Ovary (tissue), 10 donors: ENCODE measurements at regions of chr16 and their contacts with region 1.

Region 1: DNA sequence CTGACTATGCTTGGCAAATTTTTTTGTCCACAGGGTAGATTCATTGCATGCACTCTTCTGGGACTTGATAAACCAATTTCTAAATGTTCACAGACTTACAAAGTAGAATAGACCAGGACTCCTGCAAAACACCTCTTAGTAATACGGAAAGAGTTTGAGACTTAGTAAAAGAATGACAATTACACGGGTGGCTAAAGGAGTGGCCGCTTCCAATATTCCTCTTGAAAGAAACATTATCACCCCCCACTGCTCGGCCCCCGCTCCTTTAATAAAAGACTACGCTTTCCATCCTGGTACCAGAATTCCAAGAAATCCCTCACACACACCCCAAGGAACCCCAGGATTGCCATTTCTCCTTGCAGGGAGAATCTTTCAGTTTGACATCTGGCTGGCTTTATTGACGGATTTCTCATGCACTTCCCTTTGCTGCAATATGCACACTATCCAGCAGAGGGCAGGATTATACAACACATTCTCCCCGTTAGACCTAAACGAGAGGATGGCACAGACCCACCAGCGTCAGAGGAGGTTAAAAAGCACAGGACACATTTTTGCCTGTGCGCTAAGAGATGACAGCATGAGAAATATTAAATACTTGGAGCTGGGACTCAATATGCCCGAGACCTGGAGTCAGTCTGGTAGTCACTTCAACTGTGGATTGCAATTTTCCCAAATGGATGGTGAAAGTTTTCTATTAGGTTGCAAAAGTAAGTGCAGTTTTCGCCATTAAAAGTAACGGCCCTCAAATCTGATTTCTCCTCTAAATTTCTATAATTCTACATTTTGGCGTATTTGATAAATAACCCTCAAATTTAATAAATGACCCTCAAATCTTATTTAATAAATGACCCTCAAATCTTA is 46.6 kb upstream of the NUDT7 start:
- DNase-seq: peak; percentile 42 to 76 (median 46)
- H3K4me3 ChIP-seq: no peak overlapping the region
- H3K27ac ChIP-seq: no peak overlapping the region
- H3K4me1 ChIP-seq: no peaks in the 10 kb centered on the region
- H3K27me3 ChIP-seq: no peaks in the 10 kb centered on the region
- CTCF ChIP-seq: peak; percentile 56 to 83 (median 82)
- EP300 ChIP-seq: no peak
- POLR2A ChIP-seq: no peak

Region 2: DNA sequence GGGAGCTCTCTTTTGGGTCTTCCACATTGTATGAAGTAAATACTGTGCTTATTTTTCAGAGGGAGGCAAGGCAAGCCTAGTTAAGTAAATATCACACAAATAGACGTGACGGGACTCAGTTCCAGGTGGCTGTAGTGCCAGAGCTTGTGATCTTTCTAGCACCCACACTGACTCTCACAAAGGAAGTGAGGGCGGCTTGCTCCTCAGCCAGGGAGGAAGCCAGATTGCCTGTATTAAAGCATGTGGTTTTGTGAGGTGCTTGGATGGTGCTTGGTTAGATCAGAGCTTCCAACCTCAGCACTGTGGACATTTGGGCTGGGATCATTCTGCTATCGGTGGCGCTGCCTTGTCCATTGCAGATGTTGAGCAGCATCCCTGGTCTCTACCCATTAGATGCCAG is 192.8 kb after region 1 on chr16:
- intact Hi-C with region 1: no loop called
- DNase-seq: no peak
- H3K4me3 ChIP-seq: no peak overlapping the region
- H3K27ac ChIP-seq: no peak overlapping the region
- H3K4me1 ChIP-seq: no peaks in the 10 kb centered on the region
- H3K27me3 ChIP-seq: no peaks in the 10 kb centered on the region
- CTCF ChIP-seq: no peak
- EP300 ChIP-seq: no peak
- POLR2A ChIP-seq: no peak

Region 3: GRCh38 chr16:77971306-77972271 is 295.9 kb after region 1 on chr16:
- intact Hi-C with region 1: loop called in 1 of 4 experiments (anchors 2 kb)
- DNase-seq: peak; percentile 26 to 71 (median 67)
- H3K4me3 ChIP-seq: no peak overlapping the region
- H3K27ac ChIP-seq: no peak overlapping the region
- H3K4me1 ChIP-seq: no peaks in the 10 kb centered on the region
- H3K27me3 ChIP-seq: no peaks in the 10 kb centered on the region
- CTCF ChIP-seq: peak in 2 of 3 donors; percentile 14 to 50
- EP300 ChIP-seq: no peak
- POLR2A ChIP-seq: no peak

Region 4: GRCh38 chr16:78002915-78003538 is 327.3 kb after region 1 on chr16:
- intact Hi-C with region 1: loop called in 2 of 4 experiments (anchors 10 kb)
- DNase-seq: peak; percentile 56 to 85 (median 65)
- H3K4me3 ChIP-seq: no peak overlapping the region
- H3K27ac ChIP-seq: no peak overlapping the region
- H3K4me1 ChIP-seq: no peaks in the 10 kb centered on the region
- H3K27me3 ChIP-seq: no peaks in the 10 kb centered on the region
- CTCF ChIP-seq: peak; percentile 38 to 76 (median 53)
- EP300 ChIP-seq: no peak
- POLR2A ChIP-seq: no peak

Region 5: DNA sequence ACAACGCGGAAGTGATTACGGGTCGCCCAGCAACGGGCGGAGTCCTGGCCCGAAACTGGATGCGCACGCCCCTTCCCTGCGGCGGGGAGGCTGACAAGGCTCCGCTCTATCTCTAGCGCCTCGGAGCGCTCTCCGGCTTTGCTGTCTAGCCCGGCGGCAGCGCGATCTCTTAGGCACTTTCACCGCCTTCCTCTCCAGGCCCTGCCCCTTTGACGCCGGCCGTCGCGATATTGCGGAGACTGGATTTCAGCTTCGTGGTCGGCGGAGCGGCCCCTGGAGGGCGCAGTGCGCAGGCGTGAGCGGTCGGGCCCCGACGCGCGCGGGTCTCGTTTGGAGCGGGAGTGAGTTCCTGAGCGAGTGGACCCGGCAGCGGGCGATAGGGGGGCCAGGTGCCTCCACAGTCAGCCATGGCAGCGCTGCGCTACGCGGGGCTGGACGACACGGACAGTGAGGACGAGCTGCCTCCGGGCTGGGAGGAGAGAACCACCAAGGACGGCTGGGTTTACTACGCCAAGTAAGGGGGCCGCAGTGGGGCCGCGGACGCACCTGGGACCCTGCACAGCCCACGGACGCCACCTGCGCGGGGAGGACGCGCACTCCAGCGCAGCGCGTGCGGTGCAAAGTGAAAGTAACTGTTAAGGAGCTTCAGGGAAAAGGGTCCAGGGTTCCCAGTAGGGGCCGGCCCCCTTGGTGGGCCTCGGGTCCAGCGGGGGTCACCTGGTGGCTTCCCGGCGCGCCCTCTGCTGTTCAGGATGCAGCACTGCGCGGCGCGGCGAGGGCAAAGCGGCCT is 423.9 kb after region 1 on chr16 and contains the start of gene WWOX:
- intact Hi-C with region 1: loop called in 2 of 4 experiments (anchors 10 kb)
- DNase-seq: peak; percentile 96 to 98 (median 96)
- H3K4me3 ChIP-seq: peak within 1 kb of the TSS; percentile 91
- H3K27ac ChIP-seq: peak within 1 kb of the TSS; percentile 50 to 87
- H3K4me1 ChIP-seq: no peaks in the 10 kb centered on the region
- H3K27me3 ChIP-seq: no peaks in the 10 kb centered on the region
- CTCF ChIP-seq: peak; percentile 74 to 95 (median 83)
- EP300 ChIP-seq: no peak
- POLR2A ChIP-seq: peak; percentile 64
- total RNA-seq, gene WWOX: 20.7 to 40.5 (median 25.2) TPM